Activated T-helper 2 cell treated with anti-CD3 and anti-CD28 coated beads, Interferon-gamma antibody, Interleukin-2, Interleukin-4, amounts not matched to agents 10 μg/mL and 5 μg/mL and 100 μg/mL, durations not matched to agents 14 hours and 24 hours and 36 hours (primary cell): ENCODE measurements at regions of chr6 and their contacts with region 1.

Region 1: DNA sequence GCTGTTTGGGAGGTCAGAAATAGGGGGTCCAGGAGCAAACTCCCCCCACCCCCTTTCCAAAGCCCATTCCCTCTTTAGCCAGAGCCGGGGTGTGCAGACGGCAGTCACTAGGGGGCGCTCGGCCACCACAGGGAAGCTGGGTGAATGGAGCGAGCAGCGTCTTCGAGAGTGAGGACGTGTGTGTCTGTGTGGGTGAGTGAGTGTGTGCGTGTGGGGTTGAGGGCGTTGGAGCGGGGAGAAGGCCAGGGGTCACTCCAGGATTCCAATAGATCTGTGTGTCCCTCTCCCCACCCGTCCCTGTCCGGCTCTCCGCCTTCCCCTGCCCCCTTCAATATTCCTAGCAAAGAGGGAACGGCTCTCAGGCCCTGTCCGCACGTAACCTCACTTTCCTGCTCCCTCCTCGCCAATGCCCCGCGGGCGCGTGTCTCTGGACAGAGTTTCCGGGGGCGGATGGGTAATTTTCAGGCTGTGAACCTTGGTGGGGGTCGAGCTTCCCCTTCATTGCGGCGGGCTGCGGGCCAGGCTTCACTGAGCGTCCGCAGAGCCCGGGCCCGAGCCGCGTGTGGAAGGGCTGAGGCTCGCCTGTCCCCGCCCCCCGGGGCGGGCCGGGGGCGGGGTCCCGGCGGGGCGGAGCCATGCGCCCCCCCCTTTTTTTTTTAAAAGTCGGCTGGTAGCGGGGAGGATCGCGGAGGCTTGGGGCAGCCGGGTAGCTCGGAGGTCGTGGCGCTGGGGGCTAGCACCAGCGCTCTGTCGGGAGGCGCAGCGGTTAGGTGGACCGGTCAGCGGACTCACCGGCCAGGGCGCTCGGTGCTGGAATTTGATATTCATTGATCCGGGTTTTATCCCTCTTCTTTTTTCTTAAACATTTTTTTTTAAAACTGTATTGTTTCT is at the start of gene VEGFA:
- DNase-seq: peak; percentile 84
- H3K4me3 Mint-ChIP-seq: peak within 1 kb of the TSS; percentile 93
- H3K27ac Mint-ChIP-seq: peak within 1 kb of the TSS; percentile 89
- H3K4me1 Mint-ChIP-seq: peaks cover 30% of the 10 kb centered on the region
- H3K27me3 Mint-ChIP-seq: peaks cover 1% of the 10 kb centered on the region
- total RNA-seq, gene VEGFA: 50.7 and 55.2 TPM in 2 replicates

Region 2: GRCh38 chr6:43629505-43630300 is 140.1 kb before region 1 on chr6:
- intact Hi-C with region 1: loop called (anchors 5 kb)
- DNase-seq: peak; percentile 90
- H3K4me3 Mint-ChIP-seq: peak overlapping the region; percentile 100
- H3K27ac Mint-ChIP-seq: peak overlapping the region; percentile 98
- H3K4me1 Mint-ChIP-seq: peaks cover 37% of the 10 kb centered on the region
- H3K27me3 Mint-ChIP-seq: no peaks in the 10 kb centered on the region

Region 3: GRCh38 chr6:43667245-43668150 is 102.3 kb before region 1 on chr6:
- intact Hi-C with region 1: loop called (anchors 5 kb)
- DNase-seq: peak; percentile 71
- H3K4me3 Mint-ChIP-seq: no peak overlapping the region
- H3K27ac Mint-ChIP-seq: peak overlapping the region; percentile 40
- H3K4me1 Mint-ChIP-seq: peaks cover 35% of the 10 kb centered on the region
- H3K27me3 Mint-ChIP-seq: no peaks in the 10 kb centered on the region

Region 4: DNA sequence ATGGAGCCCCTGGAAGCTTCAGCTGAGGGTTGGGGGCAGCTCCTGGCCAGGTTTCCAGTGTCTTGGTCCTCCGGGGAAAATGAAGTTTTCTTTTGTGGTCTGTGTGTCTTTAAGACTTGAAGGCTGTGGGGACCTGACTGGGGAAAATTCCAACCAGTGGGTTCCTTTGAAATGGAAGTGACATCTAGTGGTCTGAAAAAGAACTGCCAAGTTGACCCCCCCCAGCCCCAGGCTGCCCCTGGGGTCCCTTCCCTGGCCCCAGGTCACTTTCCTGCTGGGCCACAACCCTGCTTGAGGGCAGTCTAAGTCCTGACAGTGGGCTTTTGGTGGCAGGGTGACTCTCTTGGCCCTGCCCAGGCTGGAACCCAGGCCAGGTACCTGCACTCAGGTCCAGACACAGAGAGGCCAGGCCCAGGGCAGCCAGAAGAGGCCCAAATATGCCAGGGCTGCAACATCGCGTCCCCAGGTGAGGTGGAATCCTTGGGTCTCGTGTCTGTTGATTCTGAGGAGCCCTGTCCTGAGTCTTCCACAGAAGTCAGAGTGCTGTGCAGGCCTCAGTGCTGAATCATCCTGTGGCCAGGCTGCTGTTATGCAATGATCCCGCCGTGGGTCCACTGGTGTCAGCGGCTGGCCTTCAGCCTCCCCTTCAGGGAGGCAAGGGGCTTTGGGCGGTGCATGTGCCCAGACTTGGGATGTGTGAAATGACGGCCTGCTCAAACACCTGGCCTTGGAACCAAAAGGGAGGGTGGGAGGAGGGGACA is 68.7 kb after region 1 on chr6:
- intact Hi-C with region 1: loop called (anchors 1 kb)
- DNase-seq: no peak
- H3K4me3 Mint-ChIP-seq: no peak overlapping the region
- H3K27ac Mint-ChIP-seq: no peak overlapping the region
- H3K4me1 Mint-ChIP-seq: no peaks in the 10 kb centered on the region
- H3K27me3 Mint-ChIP-seq: peaks cover 7% of the 10 kb centered on the region

Region 5: GRCh38 chr6:44002593-44003344 is 233.0 kb after region 1 on chr6:
- intact Hi-C with region 1: loop called (anchors 2 kb)
- DNase-seq: peak; percentile 49
- H3K4me3 Mint-ChIP-seq: peak overlapping the region; percentile 54
- H3K27ac Mint-ChIP-seq: no peak overlapping the region
- H3K4me1 Mint-ChIP-seq: peaks cover 10% of the 10 kb centered on the region
- H3K27me3 Mint-ChIP-seq: peaks cover 27% of the 10 kb centered on the region

Region 6: DNA sequence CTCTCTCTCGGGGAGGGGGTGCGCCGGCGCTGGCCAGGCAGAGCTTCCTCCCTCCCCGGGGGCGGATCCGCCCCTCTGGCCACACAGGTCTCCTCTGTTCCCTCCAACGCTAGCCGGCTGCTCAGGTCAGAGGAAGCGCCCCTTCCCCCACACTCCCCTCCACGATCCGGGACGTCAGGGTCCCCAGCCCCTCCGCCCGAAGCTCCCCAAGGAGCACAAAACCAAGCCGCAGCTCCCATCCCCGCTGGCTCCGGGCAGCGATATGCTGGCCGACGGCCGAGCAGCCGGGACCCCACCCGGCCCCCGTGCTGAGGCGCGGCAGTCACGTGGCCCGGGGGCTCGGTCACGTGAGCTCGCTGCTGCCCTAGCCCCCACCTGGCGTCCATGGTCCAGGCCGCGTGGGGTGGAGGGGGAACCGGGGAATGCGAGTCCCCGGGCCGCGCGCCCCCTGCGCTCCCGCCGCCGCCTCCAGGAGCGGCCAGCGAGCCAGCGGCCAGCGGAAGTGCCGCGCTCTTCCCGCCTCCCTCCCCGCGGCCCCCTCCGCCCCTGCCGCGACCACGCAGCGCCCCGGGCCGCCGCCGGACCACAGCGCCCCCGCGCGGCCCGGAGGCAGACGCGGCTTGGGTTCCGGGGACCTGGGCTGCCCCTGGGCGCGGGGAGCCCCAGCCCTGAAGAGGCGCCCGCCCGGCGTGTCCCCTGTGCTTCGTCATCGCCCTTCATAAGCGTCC is 487.4 kb after region 1 on chr6 and contains the start of gene SLC35B2:
- intact Hi-C with region 1: loop called (anchors 5 kb)
- DNase-seq: peak; percentile 65
- H3K4me3 Mint-ChIP-seq: peak within 1 kb of the TSS; percentile 84
- H3K27ac Mint-ChIP-seq: peak within 1 kb of the TSS; percentile 85
- H3K4me1 Mint-ChIP-seq: peaks cover 51% of the 10 kb centered on the region
- H3K27me3 Mint-ChIP-seq: no peaks in the 10 kb centered on the region
- total RNA-seq, gene SLC35B2: 27.6 and 29.6 TPM in 2 replicates